Ovary (tissue), 10 donors: ENCODE measurements at regions of chr2 and their contacts with region 1.

Region 1: DNA sequence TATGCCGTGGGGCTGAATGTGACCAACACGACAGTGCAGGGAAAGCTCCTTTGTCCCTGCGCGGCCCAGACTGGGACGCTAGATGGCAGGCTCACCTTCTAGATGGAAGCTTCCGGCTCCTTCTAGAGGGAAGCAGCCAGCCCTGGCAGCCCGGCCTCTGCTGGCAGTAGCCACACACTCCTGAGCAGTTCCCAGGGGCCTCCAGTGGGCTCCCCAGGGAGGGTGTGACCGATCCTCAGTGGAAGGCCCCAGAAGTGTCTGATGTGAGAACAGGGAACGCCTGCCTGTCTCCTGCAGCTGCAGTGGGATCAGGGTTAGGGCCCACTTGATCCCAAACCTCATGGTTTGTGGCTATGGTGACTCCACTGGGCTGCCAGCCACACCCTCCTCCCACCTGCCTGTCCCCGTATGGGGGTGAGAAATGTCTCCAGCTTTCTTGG is 48.5 kb upstream of the LRPPRC start:
- DNase-seq: peak; percentile 53 to 80 (median 64)
- H3K4me3 ChIP-seq: no peak overlapping the region
- H3K27ac ChIP-seq: no peak overlapping the region
- H3K4me1 ChIP-seq: peaks cover 4% of the 10 kb centered on the region
- H3K27me3 ChIP-seq: no peaks in the 10 kb centered on the region
- CTCF ChIP-seq: peak; percentile 39 to 50 (median 46)
- EP300 ChIP-seq: no peak
- POLR2A ChIP-seq: no peak

Region 2: DNA sequence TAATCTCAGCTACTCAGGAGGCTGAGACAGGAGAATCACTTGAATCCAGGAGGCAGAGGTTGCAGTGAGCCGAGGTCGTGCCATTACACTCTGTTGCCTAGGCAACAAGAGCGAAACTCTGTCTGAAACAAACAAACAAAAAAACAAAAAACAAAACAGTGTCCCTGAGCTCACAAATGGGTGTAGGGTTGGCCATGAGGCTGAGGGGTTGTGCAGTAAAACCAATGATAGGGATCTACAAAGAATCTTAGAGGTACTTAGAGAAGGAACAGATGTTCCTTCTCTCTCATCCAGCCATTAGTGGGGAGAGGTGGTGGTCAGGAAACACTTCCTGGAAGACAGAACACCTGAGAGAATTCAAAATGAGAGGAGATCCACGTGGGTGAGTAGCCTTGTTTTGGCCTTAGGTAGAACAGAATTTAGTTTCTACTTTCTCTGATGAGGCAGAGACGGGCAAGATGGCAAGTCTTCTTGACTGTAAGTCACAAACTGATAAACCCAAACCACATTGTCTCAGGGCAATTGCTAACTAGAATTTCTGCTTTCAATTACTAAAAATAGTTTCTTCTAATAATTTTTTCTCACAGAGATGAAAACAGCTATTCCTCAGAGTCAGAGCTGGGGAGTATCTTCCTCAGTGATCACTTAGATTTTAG is 62.9 kb after region 1 on chr2:
- intact Hi-C with region 1: no loop called
- DNase-seq: no peak
- H3K4me3 ChIP-seq: no peak overlapping the region
- H3K27ac ChIP-seq: no peak overlapping the region
- H3K4me1 ChIP-seq: no peaks in the 10 kb centered on the region
- H3K27me3 ChIP-seq: no peaks in the 10 kb centered on the region
- CTCF ChIP-seq: no peak
- EP300 ChIP-seq: no peak
- POLR2A ChIP-seq: no peak

Region 3: DNA sequence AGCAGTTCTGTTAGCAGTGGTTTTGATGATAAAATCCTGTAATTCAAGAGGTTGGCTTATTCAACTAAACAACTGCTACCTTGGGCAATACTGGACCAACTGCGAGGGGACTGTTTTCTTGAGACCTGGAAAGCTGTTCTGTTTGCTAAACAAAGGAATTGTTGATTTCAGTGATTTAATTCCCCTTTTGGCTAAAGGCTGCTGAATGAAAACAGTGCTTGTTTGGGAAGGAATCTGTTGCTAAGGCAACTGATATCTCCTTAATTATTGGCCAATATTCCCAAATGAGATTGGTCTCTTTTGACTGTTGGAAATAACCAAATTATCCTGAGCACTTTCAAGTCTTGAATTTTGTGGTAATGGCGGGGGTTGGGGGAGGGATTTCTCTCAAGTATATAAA is 454.2 kb after region 1 on chr2:
- intact Hi-C with region 1: no loop called
- DNase-seq: no peak
- H3K4me3 ChIP-seq: no peak overlapping the region
- H3K27ac ChIP-seq: no peak overlapping the region
- H3K4me1 ChIP-seq: no peaks in the 10 kb centered on the region
- H3K27me3 ChIP-seq: no peaks in the 10 kb centered on the region
- CTCF ChIP-seq: no peak
- EP300 ChIP-seq: no peak
- POLR2A ChIP-seq: no peak

Region 4: DNA sequence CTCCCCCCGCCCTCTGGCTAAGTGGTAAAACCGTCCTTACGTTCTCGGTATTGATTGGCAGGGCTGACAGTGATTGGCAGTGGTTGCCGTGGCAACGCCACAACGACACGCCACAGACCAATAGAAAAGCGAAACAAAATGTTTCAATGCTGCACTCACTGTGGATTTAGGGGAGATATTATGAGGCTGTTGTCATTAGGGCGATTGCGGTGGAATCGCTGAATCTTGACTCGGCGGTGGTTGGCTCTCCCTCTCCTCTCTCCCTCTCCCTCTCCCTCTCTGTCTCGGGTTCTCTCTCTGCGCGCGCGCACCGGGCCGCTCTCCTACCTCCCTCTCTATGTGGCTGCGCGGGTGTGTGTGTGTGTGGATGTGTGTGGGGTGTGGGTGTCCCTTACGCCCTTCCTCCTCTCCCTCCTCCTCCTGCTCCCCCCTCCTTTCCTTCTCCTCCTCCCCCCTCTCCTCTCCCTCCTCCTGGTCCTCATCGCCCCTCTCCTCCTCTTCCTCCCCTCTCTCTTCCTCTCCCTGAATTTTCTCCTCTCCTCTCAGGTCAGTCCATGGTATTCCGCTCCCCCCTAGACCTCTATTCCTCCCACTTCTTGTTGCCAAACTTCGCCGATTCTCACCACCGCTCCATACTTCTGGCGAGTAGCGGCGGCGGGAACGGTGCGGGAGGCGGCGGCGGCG is 897.4 kb after region 1 on chr2 and contains the start of gene SIX3:
- intact Hi-C with region 1: loop called in 1 of 4 experiments (anchors 10 kb)
- DNase-seq: no peak
- H3K4me3 ChIP-seq: no peak within 1 kb of the TSS
- H3K27ac ChIP-seq: no peak within 1 kb of the TSS
- H3K4me1 ChIP-seq: peaks cover 4% of the 10 kb centered on the region
- H3K27me3 ChIP-seq: no peaks in the 10 kb centered on the region
- CTCF ChIP-seq: no peak
- EP300 ChIP-seq: no peak
- POLR2A ChIP-seq: no peak
- total RNA-seq, gene SIX3: not detected

Region 5: DNA sequence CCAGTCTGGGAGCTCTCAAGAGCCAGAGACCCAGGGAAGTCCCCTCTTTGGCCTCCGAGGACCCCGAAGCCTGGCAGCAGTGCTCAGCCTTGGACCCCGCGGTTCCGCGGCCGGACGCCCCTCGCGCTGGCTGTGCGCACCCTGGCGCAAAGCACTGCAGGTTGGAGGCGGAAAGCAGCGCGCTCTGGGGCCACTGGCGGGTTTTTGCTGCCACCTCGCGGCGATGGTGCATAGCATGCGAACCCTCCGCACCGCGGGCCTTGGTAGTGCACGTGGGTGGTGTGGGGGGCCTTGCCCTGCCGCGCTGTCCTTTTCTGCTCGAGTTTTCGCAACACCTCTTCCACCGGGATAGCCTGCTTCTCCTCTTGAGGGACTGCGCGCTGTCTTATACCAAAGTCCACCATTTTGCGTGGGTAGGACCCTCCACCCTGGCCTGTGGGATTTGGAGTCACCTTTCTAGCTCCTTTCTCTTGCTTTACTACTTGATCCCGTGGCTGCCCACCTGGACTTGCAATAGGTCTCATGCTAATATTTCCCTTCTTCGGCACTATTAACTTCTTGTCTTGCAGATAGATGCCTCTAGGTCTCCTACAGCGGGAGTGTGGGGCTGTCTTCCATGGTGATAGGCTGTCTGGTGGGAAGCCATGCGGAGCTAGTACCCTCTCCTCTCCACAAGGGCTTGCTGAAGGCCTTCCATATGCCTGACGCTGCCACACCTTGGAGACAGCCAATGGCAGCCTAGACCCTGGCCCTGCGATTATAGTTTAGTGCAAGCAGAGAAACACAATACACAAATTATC is 911.5 kb after region 1 on chr2:
- intact Hi-C with region 1: loop called in 1 of 4 experiments (anchors 10 kb)
- DNase-seq: peak; percentile 30 to 73 (median 53)
- H3K4me3 ChIP-seq: no peak overlapping the region
- H3K27ac ChIP-seq: no peak overlapping the region
- H3K4me1 ChIP-seq: peaks cover 10% of the 10 kb centered on the region
- H3K27me3 ChIP-seq: no peaks in the 10 kb centered on the region
- CTCF ChIP-seq: peak in 2 of 3 donors; percentile 51 to 61
- EP300 ChIP-seq: no peak
- POLR2A ChIP-seq: no peak